OCI-LY7 (cell line): ENCODE measurements at regions of chr5 and their contacts with region 1.

Region 1: DNA sequence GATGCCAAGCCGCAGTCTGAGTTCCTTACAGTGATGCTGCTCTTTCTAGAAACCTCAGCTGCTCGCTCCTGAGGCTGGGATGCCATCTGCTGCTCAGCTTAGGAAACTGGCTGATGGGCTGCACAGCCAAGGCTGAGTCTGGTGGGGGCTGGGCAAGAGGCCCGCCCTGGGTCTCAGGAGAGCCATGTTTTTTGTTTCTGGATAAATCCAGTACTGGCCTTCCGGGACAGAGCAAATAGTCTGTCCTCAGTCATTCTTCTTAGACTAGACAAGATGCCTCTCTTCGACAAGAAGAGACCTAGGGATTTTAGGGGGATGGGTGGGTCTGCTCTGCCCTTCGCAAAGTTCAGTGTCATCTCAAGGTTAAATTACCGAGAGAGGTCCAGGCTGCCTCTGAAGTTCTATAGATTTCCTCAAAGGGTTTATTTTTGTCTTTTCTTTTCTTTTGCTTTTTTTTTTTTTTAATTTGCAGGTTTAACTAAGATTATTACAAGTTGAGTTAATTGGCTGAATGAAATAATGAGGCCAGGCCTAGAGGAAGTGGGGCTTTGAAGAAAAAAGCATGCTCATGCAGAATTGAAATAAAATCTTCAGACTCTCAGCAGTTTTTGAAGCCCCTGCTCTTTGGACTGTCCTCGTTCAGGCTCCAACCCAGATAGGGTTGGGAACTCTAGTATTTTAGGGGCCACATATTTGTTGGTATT is 30.6 kb upstream of the MATR3 start:
- DNase-seq: peak; percentile 69
- H3K4me3 ChIP-seq: no peak overlapping the region
- H3K27ac ChIP-seq: no peak overlapping the region
- H3K4me1 ChIP-seq: peaks cover 4% of the 10 kb centered on the region
- CTCF ChIP-seq: peak; percentile 81

Region 2: DNA sequence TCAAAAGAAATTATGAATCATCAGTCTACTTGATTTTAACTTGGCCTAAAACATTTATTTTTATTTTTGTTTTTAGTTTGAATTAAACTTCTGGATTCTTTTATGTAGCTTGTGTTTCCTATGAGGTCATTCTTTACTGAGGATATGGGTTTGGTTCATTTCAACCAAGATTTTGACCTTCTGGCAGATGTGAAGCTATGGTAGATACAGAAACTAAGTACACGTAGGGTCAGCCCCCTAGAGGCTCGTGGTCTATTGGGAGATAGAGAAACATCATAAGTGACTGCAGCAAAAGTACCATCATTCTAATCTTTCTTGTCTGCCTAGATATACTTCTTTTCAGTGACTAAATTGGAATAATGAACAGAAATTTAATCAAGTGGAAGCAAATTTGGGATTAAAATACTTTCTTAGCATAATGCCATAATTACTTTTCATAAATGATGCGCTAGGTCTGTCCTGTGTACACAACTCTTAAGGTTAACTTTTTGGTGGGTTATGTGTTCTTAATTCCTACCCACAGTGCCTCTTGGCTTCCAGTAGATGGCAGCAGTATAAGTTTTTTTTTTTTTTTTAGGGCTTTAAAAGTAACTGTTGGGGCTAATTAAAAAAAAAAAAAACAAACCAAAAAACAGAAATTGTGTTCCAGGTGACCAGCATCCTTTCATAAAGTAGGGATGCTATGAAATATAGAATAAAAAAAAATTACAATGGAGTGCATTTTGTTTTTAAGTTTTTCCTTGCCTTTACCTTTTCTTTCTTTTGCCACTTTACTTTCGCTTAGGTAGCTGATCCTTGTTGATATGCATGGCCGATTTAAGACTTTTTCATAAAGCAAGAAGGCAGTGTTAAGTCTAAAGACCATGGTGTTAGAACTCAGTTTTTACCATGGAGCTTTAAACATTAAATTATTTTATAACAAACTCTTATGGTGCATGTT is 437.7 kb before region 1 on chr5:
- CTCF ChIA-PET with region 1: no interaction called
- POLR2A ChIA-PET with region 1: interaction called, 3 read pairs
- intact Hi-C with region 1: loop called (anchors 5 kb)
- DNase-seq: peak; percentile 48
- H3K4me3 ChIP-seq: no peak overlapping the region
- H3K27ac ChIP-seq: no peak overlapping the region
- H3K4me1 ChIP-seq: no peaks in the 10 kb centered on the region
- CTCF ChIP-seq: peak; percentile 86